Posterior vena cava (tissue), 2 donors: ENCODE measurements at regions of chr7 and their contacts with region 1.

Region 1: DNA sequence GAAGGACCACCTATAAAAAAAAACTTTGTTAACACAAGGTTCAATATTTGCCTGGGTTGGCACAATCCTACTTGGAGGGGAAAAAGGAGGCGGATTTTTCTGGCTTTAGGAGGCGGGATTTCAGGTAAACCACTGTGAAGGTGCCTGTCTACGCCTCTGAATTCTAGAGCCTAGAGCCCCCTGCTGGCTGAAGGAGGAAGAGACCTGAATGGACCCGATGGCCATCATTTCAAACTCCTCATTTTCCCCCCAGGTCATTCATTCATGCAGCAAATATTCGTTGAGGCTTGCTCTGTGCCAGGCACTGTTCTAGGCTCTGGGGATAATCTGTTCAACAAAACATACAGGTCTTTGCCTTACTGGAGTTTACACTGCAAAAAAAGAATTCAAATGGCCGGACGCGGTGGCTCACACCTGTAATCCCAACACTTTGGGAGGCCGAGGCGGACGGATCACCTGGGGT is 90.3 kb upstream of the NFE2L3 start:
- DNase-seq: no peak

Region 2: GRCh38 chr7:25886387-25887240 is 175.1 kb before region 1 on chr7:
- intact Hi-C with region 1: loop called (anchors 5 to 10 kb)
- DNase-seq: no peak

Region 3: DNA sequence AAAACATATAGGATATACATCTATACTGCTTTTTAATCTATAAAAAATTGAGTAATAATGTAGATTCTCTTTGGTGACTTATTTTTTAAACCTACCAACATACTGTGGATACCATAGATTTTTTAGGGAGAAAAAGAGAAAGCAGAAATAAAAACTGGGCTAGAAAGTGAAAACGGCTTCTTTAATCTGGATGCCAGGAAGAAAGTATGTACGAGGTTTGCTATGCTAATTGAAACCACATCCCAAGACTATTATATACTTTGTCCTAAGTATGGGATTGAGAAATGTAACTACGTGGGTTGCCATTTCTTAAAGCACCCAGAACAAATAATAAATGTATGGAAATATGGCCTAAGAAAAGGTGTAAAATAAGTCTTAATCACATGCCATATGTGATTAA is 38.7 kb before region 1 on chr7:
- intact Hi-C with region 1: no loop called
- DNase-seq: no peak

Region 4: DNA sequence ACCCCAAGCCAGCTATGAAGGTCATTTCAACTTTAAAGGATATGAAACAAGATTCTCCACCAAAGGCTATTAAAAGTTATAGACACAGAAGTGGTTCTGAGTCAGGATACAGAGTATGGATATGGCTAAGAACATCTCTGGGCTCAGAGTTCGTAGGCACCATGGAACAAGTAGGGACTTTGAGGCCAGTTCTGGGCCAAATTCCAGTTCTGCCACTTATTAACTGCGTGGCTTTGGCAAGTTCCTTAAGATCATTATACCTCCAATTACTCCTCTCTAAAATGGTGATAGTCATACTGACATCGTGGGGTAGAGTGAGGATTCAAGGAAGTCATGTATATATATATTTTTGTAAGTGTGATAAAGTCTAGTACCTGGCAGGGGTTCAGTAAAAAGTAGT is 15.6 kb before region 1 on chr7:
- intact Hi-C with region 1: loop called in 1 of 2 experiments (anchors 1 kb)
- DNase-seq: no peak